OCI-LY7 (cell line): ENCODE measurements at regions of chr9 and their contacts with region 1.

Region 1: GRCh38 chr9:14296495-14297113 is 17.3 kb downstream of the NFIB start:
- DNase-seq: no peak
- H3K4me3 ChIP-seq: no peak overlapping the region
- H3K27ac ChIP-seq: no peak overlapping the region
- H3K4me1 ChIP-seq: no peaks in the 10 kb centered on the region
- CTCF ChIP-seq: no peak

Region 2: DNA sequence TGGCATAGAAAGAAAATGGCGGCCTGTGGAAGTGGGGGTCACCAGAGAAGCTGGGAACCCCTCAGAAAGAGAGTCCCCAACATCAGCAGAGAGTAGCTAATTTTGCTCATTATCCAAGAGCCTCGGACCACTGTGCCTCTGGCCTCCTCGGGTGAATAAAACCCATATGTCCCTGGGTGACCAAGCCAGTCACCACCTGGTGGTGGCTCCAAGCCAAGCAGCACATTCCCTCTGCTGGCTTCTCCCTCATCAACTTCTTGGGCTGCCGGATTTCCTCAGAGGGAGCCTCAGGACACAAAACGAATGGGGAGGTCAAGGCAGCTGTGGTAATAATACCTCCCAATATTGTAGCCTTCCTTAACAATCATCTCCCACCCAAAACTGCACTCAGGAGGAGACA is 225.1 kb before region 1 on chr9:
- CTCF ChIA-PET with region 1: no interaction called
- POLR2A ChIA-PET with region 1: no interaction called
- intact Hi-C with region 1: no loop called
- DNase-seq: no peak
- H3K4me3 ChIP-seq: no peak overlapping the region
- H3K27ac ChIP-seq: no peak overlapping the region
- H3K4me1 ChIP-seq: no peaks in the 10 kb centered on the region
- CTCF ChIP-seq: 0 out of 2 replicates have a peak, but pooled peaks have one; percentile 12

Region 3: GRCh38 chr9:14119694-14120514 is 176.7 kb before region 1 on chr9:
- CTCF ChIA-PET with region 1: no interaction called
- POLR2A ChIA-PET with region 1: no interaction called
- intact Hi-C with region 1: no loop called
- DNase-seq: no peak
- H3K4me3 ChIP-seq: no peak overlapping the region
- H3K27ac ChIP-seq: no peak overlapping the region
- H3K4me1 ChIP-seq: no peaks in the 10 kb centered on the region
- CTCF ChIP-seq: no peak

Region 4: DNA sequence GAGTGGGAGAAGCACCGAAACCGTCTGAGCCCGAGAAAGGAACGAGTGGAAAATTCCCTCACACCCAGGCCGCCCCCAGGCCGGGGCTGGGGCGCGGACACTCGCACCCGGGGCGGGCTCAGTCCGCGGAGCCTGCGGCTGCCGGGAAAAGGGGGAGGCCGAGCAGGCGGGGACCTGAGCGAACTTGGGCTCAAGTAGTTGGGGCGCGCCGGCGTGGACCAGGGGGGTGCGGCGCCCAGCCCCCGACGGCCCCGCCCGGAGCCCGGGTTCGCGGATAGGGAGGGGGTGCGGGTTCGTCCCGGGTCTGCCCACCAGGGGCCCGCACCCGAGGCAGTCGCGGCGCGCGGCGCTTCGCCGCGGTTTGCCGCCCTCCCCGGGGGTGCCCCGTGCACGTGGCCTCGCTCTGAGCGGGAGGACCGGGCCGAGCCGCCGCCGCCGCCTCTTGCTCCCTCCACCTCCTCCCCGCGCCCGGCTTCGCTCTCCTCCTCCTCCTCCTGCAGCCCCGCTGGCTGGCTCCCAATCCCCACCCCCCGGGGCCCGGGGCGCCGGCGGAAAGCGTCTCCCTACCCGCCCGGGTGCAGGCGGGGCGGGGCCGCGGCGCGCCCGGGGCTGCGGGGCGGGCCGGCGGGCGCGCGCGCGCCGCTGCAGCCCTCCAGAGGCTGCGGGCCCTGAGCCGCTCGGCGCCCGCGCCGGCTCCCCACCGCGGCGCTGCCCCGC is 18.5 kb after region 1 on chr9:
- CTCF ChIA-PET with region 1: no interaction called
- POLR2A ChIA-PET with region 1: interaction called, 10 read pairs
- intact Hi-C with region 1: no loop called
- DNase-seq: peak; percentile 64
- H3K4me3 ChIP-seq: peak overlapping the region; percentile 93
- H3K27ac ChIP-seq: peak overlapping the region; percentile 86
- H3K4me1 ChIP-seq: peaks cover 70% of the 10 kb centered on the region
- CTCF ChIP-seq: no peak

Region 5: DNA sequence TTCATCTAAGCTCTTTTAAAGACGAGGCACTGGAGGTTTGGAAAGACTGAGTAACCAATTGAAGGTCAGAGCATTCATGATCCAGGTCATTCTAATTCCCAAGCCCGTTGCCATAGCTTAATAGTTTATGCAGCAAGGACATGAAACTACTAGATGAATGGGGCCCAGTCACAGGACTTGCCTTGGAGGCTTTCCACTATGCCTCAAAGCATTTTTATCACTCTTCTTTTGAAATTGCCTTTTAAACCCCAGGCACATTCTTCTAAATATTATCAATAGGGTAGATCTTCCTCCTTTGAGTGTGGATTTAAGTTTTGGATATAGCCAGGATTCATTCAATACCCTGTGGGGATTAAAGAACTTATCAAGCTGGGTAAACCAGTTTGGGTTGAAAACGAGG is 34.6 kb after region 1 on chr9:
- CTCF ChIA-PET with region 1: no interaction called
- POLR2A ChIA-PET with region 1: no interaction called
- intact Hi-C with region 1: no loop called
- DNase-seq: no peak
- H3K4me3 ChIP-seq: no peak overlapping the region
- H3K27ac ChIP-seq: no peak overlapping the region
- H3K4me1 ChIP-seq: peaks cover 17% of the 10 kb centered on the region
- CTCF ChIP-seq: no peak

Region 6: DNA sequence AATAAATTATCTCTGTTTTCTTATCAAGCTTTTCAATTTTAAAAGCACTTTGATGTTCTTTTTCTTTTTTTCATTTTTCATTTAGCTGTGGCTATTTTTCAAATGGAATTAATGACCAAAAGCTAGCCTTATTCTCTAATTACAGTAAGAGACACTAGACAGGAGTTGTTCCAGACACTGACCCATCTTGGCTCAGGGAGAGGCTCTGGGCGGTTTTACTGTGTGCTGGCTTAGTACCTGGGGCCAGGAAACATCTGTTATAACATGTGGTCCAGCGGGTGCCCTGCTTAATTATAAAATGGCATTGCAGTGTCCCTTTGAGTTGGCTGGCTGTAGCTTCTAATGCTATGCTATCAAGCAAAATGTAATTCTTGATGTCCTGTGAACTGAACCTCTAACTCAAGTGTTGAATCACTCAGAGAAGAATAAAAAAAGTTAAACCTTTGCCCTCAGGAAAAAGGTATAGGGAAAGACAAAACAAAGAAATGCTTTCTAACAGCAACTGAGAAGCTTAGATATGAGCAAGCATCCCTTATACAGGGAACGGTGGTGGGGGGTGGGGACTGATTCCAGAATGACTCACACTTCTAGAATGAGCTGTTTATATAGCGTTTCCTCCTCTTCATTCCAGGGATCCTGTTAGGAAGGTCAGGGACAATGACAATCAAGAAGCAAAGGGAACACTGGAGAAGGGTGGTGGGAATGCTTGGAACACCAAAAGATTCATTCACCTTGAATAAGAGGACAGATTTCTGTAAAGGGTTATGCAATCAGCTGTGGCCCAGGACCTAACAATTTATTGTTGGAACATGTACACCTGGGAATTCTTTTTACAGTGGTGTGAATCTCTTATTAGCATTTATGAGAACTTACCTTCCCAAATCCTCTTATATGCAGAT is 76.1 kb after region 1 on chr9:
- CTCF ChIA-PET with region 1: no interaction called
- POLR2A ChIA-PET with region 1: interaction called, 11 read pairs
- intact Hi-C with region 1: no loop called
- DNase-seq: no peak
- H3K4me3 ChIP-seq: no peak overlapping the region
- H3K27ac ChIP-seq: no peak overlapping the region
- H3K4me1 ChIP-seq: no peaks in the 10 kb centered on the region
- CTCF ChIP-seq: no peak